AG04449 (cell line): ENCODE measurements at regions of chr9 and their contacts with region 1.

Region 1: GRCh38 chr9:35616681-35617459 is 1.3 kb downstream of the CD72 start:
- DNase-seq: no peak
- H3K4me3 ChIP-seq: peak overlapping the region; percentile 47
- CTCF ChIP-seq: no peak

Region 2: GRCh38 chr9:35287986-35288632 is 328.8 kb before region 1 on chr9:
- CTCF ChIA-PET with region 1: no interaction called
- POLR2A ChIA-PET with region 1: no interaction called
- DNase-seq: no peak
- H3K4me3 ChIP-seq: no peak overlapping the region
- CTCF ChIP-seq: no peak

Region 3: DNA sequence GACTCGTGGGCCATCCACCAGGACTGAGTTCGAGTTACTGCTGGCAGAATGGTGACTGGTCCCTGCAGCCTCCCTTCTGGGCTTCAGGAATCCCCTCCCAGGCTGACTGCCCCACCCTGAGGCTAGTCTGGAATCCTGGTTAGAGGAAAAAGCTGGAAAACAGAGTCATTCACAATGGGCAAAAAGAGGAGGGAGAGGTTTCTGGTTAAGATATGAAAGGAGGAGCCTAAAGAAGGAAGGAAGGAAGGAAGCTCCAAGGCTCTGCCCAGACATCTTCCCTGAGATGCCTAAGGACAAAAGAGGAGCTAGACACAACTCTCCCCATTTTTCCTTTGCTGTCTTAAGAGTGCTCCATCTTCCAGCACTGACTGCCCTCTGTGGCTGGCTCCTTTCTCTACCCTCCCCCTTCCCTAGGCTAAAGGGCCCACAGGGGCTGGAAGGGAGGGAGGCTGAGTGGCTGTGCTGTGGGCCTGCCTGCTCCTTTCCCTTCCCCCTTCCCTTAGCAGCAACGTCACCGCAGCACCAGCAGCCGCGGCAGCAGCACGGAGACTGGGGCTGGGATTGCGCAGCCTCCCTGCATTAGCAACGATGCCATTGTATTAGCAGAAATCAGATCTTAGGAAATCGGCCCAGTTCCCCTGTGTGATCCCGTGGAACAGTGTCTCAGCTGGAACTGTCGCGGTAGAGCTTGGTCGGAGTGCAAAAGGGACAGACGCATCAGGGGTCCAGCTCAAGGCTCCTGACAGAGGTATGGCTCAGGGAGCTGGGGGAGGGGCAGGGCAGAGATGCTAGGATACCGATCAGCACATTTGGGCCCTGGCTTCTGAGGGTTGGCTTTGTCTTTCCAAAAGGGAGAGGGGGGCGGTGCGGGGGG is 78.3 kb before region 1 on chr9:
- CTCF ChIA-PET with region 1: no interaction called
- POLR2A ChIA-PET with region 1: no interaction called
- DNase-seq: no peak
- H3K4me3 ChIP-seq: peak overlapping the region; percentile 67
- CTCF ChIP-seq: no peak

Region 4: GRCh38 chr9:35603987-35604577 is 12.8 kb before region 1 on chr9:
- CTCF ChIA-PET with region 1: interaction called, 17 read pairs
- POLR2A ChIA-PET with region 1: interaction called, 3 read pairs
- DNase-seq: peak; percentile 96
- H3K4me3 ChIP-seq: peak overlapping the region; percentile 72
- CTCF ChIP-seq: peak; percentile 92

Region 5: DNA sequence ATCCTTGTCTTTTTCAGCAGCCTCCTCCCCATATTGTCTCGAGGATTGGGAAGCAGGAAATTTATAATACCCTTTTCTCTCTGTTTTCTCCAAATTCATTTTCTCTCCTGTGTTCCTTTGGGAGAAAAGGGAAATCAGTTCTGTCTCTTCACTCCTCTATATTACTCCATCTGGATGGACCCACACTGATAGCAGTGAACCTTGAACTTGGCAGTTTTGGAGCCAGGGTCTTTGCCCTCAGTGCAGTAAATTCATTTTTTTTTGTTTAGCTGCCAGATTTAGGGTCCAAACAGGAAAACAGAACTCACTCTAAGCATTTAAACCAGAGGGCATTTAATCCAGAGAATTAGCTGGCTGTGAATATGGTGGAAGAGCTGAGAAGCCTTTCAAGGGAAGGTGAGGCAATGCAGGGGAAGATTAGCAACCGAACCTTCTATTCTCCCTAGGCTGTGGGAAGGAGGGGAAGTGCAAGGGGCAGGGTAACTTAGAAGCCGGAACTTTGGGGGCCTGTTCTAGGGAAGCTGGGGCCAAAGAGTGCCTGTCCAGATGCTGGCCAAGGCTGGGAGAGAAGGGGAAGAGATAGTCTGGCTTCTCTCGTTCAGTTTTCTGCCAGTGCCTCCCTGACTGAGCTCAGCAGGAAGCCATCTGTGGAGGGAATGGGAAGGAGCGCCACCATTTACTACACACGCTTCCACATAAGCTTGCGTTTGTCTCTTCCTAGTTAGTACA is 158.2 kb after region 1 on chr9:
- CTCF ChIA-PET with region 1: no interaction called
- POLR2A ChIA-PET with region 1: no interaction called
- DNase-seq: no peak
- H3K4me3 ChIP-seq: no peak overlapping the region
- CTCF ChIP-seq: no peak